WTC11 (cell line): ENCODE measurements at regions of chr7 and their contacts with region 1.

Region 1: DNA sequence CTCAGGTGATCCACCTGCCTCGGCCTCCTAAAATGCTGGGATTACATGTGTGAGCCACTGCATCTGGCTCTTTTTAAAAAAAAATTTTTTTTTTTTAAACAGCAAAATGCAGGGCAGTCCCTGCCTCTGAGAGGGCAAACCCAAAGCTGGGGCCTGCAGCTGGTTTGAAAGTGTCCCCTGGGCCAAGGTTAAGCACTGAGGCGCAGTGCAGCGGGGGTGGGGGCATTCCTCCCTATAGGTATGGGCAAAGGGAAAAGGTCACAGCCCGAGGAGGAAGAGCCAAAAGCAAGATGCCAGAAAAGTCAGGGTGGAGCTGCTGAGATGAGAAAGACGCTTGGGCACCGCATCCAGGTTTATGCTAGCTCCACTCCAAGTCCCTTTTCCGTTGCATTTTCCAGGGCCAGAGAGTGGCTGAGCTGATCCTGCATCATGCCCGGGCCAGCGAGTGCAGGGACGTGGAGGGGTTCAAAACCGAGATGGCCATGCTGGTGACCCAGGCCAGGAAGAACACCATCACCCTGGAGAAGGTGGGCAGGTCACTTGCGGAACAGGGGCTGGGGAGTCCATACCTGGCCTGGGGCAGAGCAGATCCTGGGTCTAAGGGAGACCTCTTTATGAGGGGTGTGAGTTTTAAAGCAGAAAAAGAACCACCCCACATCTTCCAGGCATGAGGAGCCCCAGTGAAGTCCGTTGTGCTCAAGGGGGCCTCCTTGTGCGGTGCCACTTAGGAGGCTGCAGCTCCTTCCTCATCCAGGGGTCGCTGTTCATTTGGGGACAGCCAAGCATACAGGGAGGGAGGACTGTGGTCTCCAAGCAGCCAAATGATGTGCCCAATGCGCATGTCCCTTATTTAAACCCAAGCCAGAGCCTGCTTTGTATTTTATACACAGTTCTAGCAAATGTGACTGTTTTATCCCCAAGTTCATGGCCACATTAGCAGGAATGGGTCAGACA is 7.0 kb upstream of the NDUFB2 start:
- DNase-seq: no peak
- ATAC-seq: peak; percentile 76
- H3K4me3 Mint-ChIP-seq: no peak overlapping the region
- H3K27ac Mint-ChIP-seq: no peak overlapping the region
- H3K4me1 Mint-ChIP-seq: no peaks in the 10 kb centered on the region
- H3K27me3 Mint-ChIP-seq: no peaks in the 10 kb centered on the region
- CTCF ChIP-seq: no peak

Region 2: GRCh38 chr7:140673063-140673773 is 16.3 kb before region 1 on chr7:
- CTCF ChIA-PET with region 1: interaction called, 21 read pairs
- POLR2A ChIA-PET with region 1: no interaction called
- DNase-seq: peak; percentile 61
- ATAC-seq: peak; percentile 73
- H3K4me3 Mint-ChIP-seq: peak overlapping the region; percentile 76
- H3K27ac Mint-ChIP-seq: no peak overlapping the region
- H3K4me1 Mint-ChIP-seq: peaks cover 11% of the 10 kb centered on the region
- H3K27me3 Mint-ChIP-seq: 0 out of 2 replicates have a peak, but pooled peaks cover 2% of the 10 kb centered on the region
- CTCF ChIP-seq: no peak

Region 3: GRCh38 chr7:140702774-140703173 is 13.3 kb after region 1 on chr7:
- CTCF ChIA-PET with region 1: no interaction called
- POLR2A ChIA-PET with region 1: no interaction called
- DNase-seq: no peak
- ATAC-seq: no peak
- H3K4me3 Mint-ChIP-seq: no peak overlapping the region
- H3K27ac Mint-ChIP-seq: no peak overlapping the region
- H3K4me1 Mint-ChIP-seq: peaks cover 7% of the 10 kb centered on the region
- H3K27me3 Mint-ChIP-seq: no peaks in the 10 kb centered on the region
- CTCF ChIP-seq: no peak